Mammary epithelial cell (primary cell): ENCODE measurements at regions of chr21 and their contacts with region 1.

Region 1: DNA sequence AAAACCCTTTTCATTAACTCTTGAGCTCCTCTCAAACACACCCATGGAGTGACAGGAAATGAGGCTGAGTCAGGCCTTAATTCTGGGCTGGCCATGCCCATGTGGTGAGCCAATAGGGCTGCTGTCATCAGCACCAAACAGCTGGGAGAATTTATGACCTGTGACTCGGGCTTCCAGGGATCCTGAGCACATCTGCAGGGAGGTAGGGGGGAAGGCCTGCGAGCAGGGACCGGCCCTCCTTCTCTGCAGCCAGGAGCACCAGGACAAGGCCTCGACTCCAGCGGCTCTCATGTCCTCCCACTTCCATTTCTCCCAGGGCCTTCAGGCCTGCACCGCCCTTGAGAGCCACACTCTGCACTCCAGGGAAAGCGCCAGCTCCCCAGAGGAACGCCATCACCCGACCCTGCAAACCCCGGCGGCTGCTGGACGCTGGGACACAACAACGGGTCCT is 14.6 kb downstream of the RIPK4 start:
- DNase-seq: peak; percentile 83
- H3K4me3 ChIP-seq: peak overlapping the region in 1 of 3 experiments; percentile 5
- H3K27ac ChIP-seq: peak overlapping the region; percentile 50
- H3K4me1 ChIP-seq: peaks cover 74% of the 10 kb centered on the region
- H3K27me3 ChIP-seq: no peaks in the 10 kb centered on the region
- CTCF ChIP-seq: no peak

Region 2: DNA sequence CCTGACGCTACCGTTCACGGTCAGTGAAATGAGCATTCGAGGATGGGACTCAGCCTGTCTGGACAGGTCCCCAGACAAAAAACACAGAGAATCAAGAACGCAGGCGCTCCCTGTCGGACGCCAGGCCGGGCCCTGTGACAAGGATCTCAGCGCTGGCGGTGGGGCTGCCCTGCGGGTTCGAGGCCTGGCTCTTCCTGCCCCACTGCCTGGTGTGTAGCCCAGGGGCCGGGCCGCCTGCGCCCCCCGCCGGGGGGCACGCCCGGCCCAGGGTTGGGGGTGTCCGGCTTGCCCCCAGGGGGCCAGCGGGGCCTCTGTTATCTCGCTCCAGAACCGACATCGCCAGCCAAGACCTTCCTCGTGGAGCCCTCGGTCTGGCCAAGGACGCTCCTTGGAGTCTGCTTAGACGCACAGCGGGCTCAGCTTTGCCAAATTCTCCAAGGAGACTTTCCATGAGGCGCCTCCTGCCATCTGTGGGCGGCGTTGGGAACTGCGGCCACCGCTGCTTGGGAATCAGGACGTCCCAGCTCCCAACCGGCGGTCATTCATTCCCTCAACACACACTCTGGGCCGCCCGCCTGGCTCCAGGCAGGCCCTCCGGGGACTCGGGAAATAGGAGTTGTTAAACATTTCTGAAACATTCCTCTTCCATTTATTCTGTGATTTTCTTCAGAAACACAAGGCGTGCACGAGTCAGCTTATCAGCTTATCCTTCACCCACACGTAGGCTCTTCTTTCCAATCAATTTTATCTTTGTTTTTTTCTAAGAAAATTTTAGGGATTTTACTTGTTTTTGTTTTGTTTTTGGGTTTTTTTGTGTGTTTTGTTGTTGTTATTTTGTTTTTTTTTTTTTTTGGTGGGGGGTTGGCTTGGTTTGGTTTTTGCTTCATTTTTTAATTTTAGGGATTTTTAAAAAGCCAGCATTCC is 26.0 kb after region 1 on chr21:
- CTCF ChIA-PET with region 1: interaction called, 5 read pairs
- dilution Hi-C with region 1: no loop called
- in situ Hi-C with region 1: no loop called
- intact Hi-C with region 1: loop called (anchors 1 kb)
- DNase-seq: peak; percentile 86
- H3K4me3 ChIP-seq: no peak overlapping the region
- H3K27ac ChIP-seq: peak overlapping the region; percentile 56
- H3K4me1 ChIP-seq: peaks cover 25% of the 10 kb centered on the region
- H3K27me3 ChIP-seq: no peaks in the 10 kb centered on the region
- CTCF ChIP-seq: peak; percentile 94